Caco-2 (cell line): ENCODE measurements at regions of chrX and their contacts with region 1.

Region 1: DNA sequence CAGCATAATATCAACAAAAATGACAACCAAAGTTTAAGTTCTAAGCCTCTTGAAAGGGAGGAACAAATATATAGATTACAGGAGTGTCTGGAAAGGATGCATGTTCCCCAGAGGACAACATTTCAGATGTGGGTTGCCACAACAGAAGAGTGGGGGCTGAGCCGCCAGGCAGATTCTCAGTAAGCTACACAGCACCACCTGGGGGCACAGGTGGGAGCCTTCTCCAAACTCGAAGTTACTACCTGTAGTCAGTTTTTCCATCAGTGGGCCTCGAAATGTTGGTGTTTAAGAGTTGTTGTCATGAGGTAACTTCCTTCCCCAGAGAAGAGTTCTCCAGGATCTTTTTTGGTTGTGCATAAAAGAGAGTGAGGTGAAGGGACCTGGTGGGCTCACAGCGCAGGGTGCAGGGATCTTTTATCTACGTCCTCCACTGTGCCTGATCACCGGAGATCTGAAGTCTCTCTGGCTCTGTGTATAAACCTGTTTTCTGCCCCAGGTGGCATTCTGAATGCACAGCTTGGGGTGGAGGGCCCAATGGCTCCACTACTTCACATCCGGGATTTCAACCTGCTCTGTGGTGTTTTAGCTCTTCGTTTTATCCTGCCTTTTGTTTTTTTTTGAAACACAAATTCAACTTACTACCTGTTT is 58.4 kb upstream of the STS start:
- DNase-seq: peak; percentile 40 to 67
- H3K4me3 ChIP-seq: no peak overlapping the region
- H3K4me3 Mint-ChIP-seq: no peak overlapping the region
- H3K27ac Mint-ChIP-seq: peak overlapping the region; percentile 79
- H3K4me1 ChIP-seq: peaks cover 34% of the 10 kb centered on the region
- H3K4me1 Mint-ChIP-seq: peaks cover 22% of the 10 kb centered on the region
- H3K27me3 ChIP-seq: no peaks in the 10 kb centered on the region
- H3K27me3 Mint-ChIP-seq: no peaks in the 10 kb centered on the region
- CTCF ChIP-seq: peak; percentile 46 to 63

Region 2: DNA sequence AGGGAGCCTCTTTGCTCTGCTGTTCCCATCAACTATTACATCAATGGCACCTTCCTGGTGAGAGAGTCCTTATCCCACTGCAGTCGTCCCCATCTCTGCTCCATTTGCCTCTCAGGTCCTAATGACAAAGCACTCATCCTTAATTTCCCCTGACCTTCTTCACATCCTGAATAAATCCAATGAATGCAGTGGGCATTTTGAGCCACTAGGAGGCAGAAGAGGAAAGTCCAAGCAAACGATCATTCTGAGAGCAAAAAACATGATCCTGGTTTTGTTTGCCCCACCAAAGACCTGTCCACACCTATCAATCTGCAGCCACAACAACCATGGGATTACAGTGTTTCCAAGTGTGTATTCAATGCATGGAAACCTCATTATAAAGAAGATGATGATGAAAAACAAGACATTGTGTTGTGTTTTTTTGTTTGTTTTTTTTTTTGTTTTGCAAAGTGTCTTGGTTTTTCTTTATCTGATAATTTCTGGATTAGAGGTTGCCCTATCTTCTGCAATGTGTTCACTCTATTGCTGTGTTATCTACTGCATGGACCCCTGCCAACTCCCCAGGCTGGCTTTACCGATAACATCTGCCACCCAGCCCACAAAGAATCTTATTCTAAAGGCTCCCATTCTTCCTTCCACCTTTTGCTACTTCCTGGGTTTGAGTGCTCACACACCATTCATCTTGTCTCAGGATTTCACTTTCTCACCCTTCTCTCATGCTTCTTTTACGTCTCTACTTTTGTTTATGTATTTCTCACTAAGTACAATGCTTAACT is 1067.6 kb before region 1 on chrX:
- CTCF ChIA-PET with region 1: no interaction called
- POLR2A ChIA-PET with region 1: no interaction called
- intact Hi-C with region 1: loop called (anchors 5 kb)
- DNase-seq: peak; percentile 26 to 42
- H3K4me3 ChIP-seq: no peak overlapping the region
- H3K4me3 Mint-ChIP-seq: no peak overlapping the region
- H3K27ac Mint-ChIP-seq: no peak overlapping the region
- H3K4me1 ChIP-seq: no peaks in the 10 kb centered on the region
- H3K4me1 Mint-ChIP-seq: no peaks in the 10 kb centered on the region
- H3K27me3 ChIP-seq: no peaks in the 10 kb centered on the region
- H3K27me3 Mint-ChIP-seq: no peaks in the 10 kb centered on the region
- CTCF ChIP-seq: peak; percentile 26 to 54

Region 3: GRCh38 chrX:6371353-6371752 is 717.7 kb before region 1 on chrX:
- CTCF ChIA-PET with region 1: no interaction called
- POLR2A ChIA-PET with region 1: no interaction called
- intact Hi-C with region 1: loop called (anchors 1 kb)
- DNase-seq: no peak
- H3K4me3 ChIP-seq: no peak overlapping the region
- H3K4me3 Mint-ChIP-seq: no peak overlapping the region
- H3K27ac Mint-ChIP-seq: no peak overlapping the region
- H3K4me1 ChIP-seq: peaks cover 35% of the 10 kb centered on the region
- H3K4me1 Mint-ChIP-seq: peaks cover 13% of the 10 kb centered on the region
- H3K27me3 ChIP-seq: no peaks in the 10 kb centered on the region
- H3K27me3 Mint-ChIP-seq: no peaks in the 10 kb centered on the region
- CTCF ChIP-seq: no peak

Region 4: DNA sequence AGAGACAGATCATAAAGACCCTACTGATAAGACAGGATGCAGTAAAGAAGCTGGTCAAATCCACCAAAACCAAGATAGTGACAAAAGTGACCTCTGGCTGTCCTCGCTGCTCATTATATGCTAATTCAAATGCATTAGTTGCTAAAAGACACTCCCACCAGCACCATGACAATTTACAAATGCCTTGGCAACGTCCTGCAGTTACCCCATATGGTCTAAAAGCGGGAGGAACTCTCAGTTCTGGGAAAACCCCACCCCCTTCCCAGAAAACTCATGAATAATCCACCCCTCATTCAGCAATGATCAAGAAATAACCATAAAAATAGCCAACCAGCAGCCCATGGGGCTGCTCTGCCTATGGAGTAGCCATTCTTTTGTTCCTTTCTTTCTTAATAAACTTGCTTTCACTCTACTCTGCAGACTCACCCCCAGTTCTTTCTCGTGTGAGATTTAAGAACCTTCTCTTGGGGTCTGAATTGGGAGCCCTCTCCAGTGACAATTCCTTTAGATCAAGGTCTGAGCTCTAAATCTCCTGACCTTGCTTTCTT is 158.7 kb before region 1 on chrX:
- CTCF ChIA-PET with region 1: no interaction called
- POLR2A ChIA-PET with region 1: no interaction called
- intact Hi-C with region 1: loop called (anchors 5 kb)
- DNase-seq: no peak
- H3K4me3 ChIP-seq: no peak overlapping the region
- H3K4me3 Mint-ChIP-seq: peak overlapping the region; percentile 74
- H3K27ac Mint-ChIP-seq: no peak overlapping the region
- H3K4me1 ChIP-seq: no peaks in the 10 kb centered on the region
- H3K4me1 Mint-ChIP-seq: no peaks in the 10 kb centered on the region
- H3K27me3 ChIP-seq: no peaks in the 10 kb centered on the region
- H3K27me3 Mint-ChIP-seq: no peaks in the 10 kb centered on the region
- CTCF ChIP-seq: no peak

Region 5: DNA sequence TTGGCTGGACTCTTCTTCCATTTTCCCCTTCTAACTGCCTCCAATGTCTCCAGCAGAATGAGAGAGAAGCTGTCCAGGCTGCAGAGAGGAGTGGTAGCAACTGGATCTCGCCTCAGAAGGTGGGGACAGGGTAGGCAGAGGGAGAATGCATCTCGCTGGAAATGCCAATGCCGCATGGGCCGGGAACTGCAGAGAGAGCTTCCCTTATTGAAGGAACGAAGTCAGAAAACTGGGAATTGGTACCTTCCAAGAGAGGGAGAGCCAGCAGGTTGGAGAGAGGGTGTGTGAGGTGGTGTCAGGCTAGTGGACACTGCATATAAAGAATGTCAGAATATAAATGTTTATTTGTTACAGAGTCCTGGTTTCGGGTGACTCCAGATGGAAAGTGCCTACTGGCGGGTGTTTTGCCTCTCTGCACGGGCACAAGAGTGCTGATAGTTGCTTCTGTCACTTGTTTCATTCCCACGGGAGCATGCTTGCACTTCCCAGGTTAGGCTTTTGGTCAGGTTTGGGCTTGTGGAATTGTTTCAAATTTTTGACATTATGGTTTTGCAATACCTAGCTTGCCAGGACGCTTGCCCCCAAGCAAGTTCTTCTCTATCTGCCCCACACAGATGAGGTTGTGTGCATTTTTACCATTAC is 98.4 kb before region 1 on chrX:
- CTCF ChIA-PET with region 1: no interaction called
- POLR2A ChIA-PET with region 1: no interaction called
- intact Hi-C with region 1: loop called (anchors 1 kb)
- DNase-seq: no peak
- H3K4me3 ChIP-seq: no peak overlapping the region
- H3K4me3 Mint-ChIP-seq: no peak overlapping the region
- H3K27ac Mint-ChIP-seq: peak overlapping the region; percentile 76
- H3K4me1 ChIP-seq: peaks cover 40% of the 10 kb centered on the region
- H3K4me1 Mint-ChIP-seq: peaks cover 7% of the 10 kb centered on the region
- H3K27me3 ChIP-seq: no peaks in the 10 kb centered on the region
- H3K27me3 Mint-ChIP-seq: no peaks in the 10 kb centered on the region
- CTCF ChIP-seq: no peak

Region 6: GRCh38 chrX:7047951-7048350 is 41.1 kb before region 1 on chrX:
- CTCF ChIA-PET with region 1: no interaction called
- POLR2A ChIA-PET with region 1: no interaction called
- intact Hi-C with region 1: no loop called
- DNase-seq: no peak
- H3K4me3 ChIP-seq: no peak overlapping the region
- H3K4me3 Mint-ChIP-seq: no peak overlapping the region
- H3K27ac Mint-ChIP-seq: no peak overlapping the region
- H3K4me1 ChIP-seq: no peaks in the 10 kb centered on the region
- H3K4me1 Mint-ChIP-seq: no peaks in the 10 kb centered on the region
- H3K27me3 ChIP-seq: no peaks in the 10 kb centered on the region
- H3K27me3 Mint-ChIP-seq: no peaks in the 10 kb centered on the region
- CTCF ChIP-seq: no peak

Region 7: GRCh38 chrX:7119950-7120877 is 31.1 kb after region 1 on chrX:
- CTCF ChIA-PET with region 1: no interaction called
- POLR2A ChIA-PET with region 1: no interaction called
- intact Hi-C with region 1: loop called (anchors 1 kb)
- DNase-seq: no peak
- H3K4me3 ChIP-seq: no peak overlapping the region
- H3K4me3 Mint-ChIP-seq: peak overlapping the region; percentile 55
- H3K27ac Mint-ChIP-seq: peak overlapping the region; percentile 77
- H3K4me1 ChIP-seq: peaks cover 34% of the 10 kb centered on the region
- H3K4me1 Mint-ChIP-seq: peaks cover 12% of the 10 kb centered on the region
- H3K27me3 ChIP-seq: no peaks in the 10 kb centered on the region
- H3K27me3 Mint-ChIP-seq: no peaks in the 10 kb centered on the region
- CTCF ChIP-seq: no peak

Region 8: DNA sequence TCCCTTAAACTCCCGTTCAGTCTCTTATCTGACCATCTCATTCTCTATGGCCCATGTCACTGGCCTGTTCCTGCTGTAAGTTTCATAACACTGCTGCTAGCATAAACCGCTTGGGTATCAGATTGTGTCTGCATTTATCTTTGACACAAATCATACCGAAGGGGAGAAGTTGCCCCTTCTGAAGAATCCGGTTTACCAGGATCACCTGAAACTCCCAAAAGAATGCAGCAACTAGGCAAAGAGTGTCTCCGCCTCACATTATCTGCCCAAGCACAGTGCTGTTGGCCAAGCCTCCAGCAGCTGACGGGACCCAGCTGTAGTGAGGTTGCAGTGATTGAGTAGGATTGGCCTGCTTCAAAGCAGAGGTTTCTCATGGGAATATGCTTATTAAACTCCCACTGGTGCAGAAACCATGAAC is 130.1 kb after region 1 on chrX:
- CTCF ChIA-PET with region 1: no interaction called
- POLR2A ChIA-PET with region 1: no interaction called
- intact Hi-C with region 1: loop called (anchors 2 kb)
- DNase-seq: peak; percentile 58 to 68
- H3K4me3 ChIP-seq: peak overlapping the region; percentile 15; the same call in 1 of the 2 replicates
- H3K4me3 Mint-ChIP-seq: peak overlapping the region; percentile 81
- H3K27ac Mint-ChIP-seq: peak overlapping the region; percentile 94
- H3K4me1 ChIP-seq: peaks cover 29% of the 10 kb centered on the region
- H3K4me1 Mint-ChIP-seq: peaks cover 23% of the 10 kb centered on the region
- H3K27me3 ChIP-seq: no peaks in the 10 kb centered on the region
- H3K27me3 Mint-ChIP-seq: no peaks in the 10 kb centered on the region
- CTCF ChIP-seq: no peak